CD14-positive monocyte (primary cell): ENCODE measurements at regions of chr19 and their contacts with region 1.

Region 1: DNA sequence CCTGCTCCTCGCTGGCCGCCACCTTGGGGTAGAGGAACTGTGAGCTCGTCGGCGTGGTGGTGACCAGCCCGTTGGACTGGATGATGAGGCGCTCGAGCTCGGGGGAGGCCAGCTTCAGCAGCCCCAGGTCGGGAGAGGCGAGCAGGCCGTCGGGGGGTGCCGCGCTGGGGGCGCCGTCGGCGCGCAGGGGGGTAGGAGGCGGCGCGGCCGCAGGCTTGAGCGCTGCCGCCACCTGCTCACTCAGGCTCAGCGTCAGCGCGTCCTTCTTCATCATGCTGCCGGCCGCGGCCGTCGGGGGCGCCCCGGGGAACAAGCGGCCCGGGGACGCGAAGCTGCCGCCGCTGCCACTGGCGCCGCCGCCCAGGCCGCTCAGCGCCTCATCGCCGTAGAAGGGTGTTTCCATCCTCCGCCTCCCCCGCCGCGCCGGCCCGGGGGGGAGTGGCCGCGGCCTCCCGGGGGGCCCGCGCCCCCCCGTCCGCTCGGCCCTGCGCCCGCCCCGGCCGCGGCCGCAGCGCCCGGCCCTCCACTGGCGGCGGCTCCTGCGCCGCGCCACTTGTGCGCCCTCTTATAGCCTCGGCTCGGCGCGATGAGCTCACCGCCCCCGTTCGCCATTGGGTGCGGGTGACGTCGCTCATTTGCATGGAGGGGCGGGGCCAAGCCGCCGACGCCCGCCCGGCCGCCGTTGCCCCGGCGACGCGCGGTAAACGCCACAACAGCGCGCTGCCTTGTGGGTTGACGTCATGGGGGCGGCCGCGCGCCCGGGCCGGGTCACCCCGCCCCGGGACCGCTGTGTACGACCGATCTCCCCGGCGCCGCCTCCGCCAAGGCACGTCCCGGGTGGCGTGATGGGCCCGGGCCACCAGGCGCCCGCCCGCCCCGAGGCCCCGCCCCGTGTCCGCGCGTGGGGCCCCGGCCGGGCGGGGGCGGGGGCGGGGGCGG is at the start of gene JUND:
- DNase-seq: peak; percentile 96 to 99 (median 99)
- H3K4me3 ChIP-seq: peak within 1 kb of the TSS; percentile 75 to 99 (median 98)
- H3K4me3 Mint-ChIP-seq: peak within 1 kb of the TSS; percentile 95 to 97
- H3K27ac ChIP-seq: peak within 1 kb of the TSS; percentile 93 to 98
- H3K27ac Mint-ChIP-seq: peak within 1 kb of the TSS; percentile 96 to 99 (median 97)
- H3K4me1 ChIP-seq: peaks cover 27 to 36% of the 10 kb centered on the region in 2 donors
- H3K4me1 Mint-ChIP-seq: peaks cover 33% of the 10 kb centered on the region
- H3K27me3 ChIP-seq: no peaks in the 10 kb centered on the region
- H3K27me3 Mint-ChIP-seq: peaks cover 0 to 4% (median 2%) of the 10 kb centered on the region in 3 donors
- CTCF ChIP-seq: no peak
- polyA plus RNA-seq, gene JUND: 22.5 to 1,792 (median 86.9) TPM

Region 2: DNA sequence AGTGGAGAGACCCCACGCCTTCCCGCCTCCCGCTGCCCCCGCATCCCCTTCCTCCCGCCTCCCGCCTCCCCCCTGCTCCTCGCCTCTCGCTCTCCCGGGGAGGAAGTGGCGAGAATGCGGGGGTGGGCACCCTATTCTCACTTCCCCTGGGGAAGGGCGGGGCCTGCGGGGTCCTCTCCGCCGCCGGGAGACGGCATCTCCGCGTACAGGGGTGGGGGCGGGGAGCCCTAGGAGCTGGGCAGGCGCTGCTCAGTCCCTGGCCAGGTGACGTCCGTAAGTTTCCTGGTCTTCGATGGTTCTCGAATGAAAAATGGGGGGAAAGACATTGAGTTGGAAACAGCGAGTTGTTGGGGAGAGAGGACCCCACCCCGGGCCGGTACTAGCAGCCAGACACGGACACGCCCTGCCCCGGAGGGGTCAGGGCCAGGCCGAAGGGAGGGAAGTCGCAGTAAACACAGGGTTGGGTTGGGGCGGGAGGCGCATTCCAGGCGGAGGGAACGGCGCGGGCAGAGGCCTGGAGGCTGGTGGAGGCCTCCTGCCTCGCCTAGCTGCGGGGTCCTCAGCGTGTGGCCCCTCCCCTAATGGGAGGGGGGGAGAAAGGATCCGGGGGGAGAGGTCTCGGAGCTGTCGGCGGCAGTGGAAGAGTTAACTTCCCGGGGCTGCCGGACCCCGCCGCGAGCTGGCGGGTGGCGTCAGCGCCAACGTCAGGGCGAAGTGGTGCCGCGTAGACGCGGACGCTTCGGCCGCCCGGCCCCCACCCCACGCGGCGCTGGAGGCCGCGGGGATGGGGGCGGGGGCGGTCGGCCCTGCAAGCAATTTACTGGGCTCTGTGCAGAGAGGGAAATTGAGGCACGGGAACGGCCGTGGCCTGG is 10.5 kb after region 1 on chr19:
- intact Hi-C with region 1: loop called (anchors 1 kb)
- DNase-seq: peak; percentile 80 to 90 (median 86)
- H3K4me3 ChIP-seq: peak overlapping the region; percentile 62 to 94 (median 92)
- H3K4me3 Mint-ChIP-seq: peak overlapping the region; percentile 87 to 92
- H3K27ac ChIP-seq: peak overlapping the region; percentile 99 to 100
- H3K27ac Mint-ChIP-seq: peak overlapping the region; percentile 97 to 100 (median 99)
- H3K4me1 ChIP-seq: peaks cover 41 to 50% of the 10 kb centered on the region in 2 donors
- H3K4me1 Mint-ChIP-seq: peaks cover 40% of the 10 kb centered on the region
- H3K27me3 ChIP-seq: no peaks in the 10 kb centered on the region
- H3K27me3 Mint-ChIP-seq: peaks cover 0 to 2% (median 0%) of the 10 kb centered on the region in 3 donors
- CTCF ChIP-seq: no peak

Region 3: DNA sequence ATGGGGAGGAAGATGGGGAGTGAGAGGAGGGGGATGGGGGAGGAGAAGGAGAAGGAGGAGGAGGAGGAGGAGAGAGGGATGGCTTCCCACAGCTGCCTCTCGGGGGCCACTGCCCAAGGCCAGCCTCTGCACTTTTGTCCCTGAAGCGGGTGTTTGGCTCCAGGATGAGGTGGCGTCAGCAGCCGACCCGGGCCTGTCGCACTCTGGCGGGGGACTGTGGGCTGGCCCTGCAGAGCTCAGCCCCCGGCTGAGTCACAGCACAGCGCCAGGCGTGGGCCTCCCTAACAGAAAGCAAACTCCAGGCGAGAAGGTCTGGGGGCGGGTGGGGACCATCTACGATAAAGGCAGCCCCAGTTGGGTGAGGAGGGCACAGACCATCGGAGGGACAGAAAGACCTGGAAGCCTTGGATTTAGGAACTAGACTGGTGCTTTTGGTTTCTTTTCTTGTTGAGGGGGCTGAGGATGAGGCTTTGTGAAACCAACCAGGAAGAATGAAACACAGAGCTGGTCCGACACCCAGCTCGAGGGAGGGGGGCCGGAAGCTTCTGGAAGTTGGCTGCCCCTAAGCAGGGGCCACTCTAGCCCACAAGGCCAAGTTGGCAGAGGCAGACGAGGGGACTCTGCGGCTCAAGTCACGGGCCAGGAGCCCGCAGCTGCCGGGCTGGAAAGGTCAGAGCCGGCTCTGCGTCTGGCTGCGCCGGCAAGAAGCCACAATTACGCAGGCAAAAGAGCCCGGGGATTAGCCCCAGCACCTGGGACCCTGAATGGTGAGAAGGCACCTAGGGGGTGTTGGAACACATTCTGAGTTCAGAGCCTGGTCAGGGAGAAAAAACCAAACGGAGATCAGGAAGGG is 23.3 kb after region 1 on chr19:
- intact Hi-C with region 1: loop called in 1 of 2 experiments (anchors 2 kb)
- DNase-seq: peak; percentile 84 to 86 (median 85)
- H3K4me3 ChIP-seq: peak overlapping the region; percentile 38 to 76 (median 45)
- H3K4me3 Mint-ChIP-seq: peak overlapping the region; percentile 88 to 92
- H3K27ac ChIP-seq: peak overlapping the region; percentile 87 to 98
- H3K27ac Mint-ChIP-seq: peak overlapping the region; percentile 97 to 100 (median 99)
- H3K4me1 ChIP-seq: peaks cover 50 to 57% of the 10 kb centered on the region in 2 donors
- H3K4me1 Mint-ChIP-seq: peaks cover 42% of the 10 kb centered on the region
- H3K27me3 ChIP-seq: no peaks in the 10 kb centered on the region
- H3K27me3 Mint-ChIP-seq: no peaks in the 10 kb centered on the region
- CTCF ChIP-seq: no peak

Region 4: DNA sequence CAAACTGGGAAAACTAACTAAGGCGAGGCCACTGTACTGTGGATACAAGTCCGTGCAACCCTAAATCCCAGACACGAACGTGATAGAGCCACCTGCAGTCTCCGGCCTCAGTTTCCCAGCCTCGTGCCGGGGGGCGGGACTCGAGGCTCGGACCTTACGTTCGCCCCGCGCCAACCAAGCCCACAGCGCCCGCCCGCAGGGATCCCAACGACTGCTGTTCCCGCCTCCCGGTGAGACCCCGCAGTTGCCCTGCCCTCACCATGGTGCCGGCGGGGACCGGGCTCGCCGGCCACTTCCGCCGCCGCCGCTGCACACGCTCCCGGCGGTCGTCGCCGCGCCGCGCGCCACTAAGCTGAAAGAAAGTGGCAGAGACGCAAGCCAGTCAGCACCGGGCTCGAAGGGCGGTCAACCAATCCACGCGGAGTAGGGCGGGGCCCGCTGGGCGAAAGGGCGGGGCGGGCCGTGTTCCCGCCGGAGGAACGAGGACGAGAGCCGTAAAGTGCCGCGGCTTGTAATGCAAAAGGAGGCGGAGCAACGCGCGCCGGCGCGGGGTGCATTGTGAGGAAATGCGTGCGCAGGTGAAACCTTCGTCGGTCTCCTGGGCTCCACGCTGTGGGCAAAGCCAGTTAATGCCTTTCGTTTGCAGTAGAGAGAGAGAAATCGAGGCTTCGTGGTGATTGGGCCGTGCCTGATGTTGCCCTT is 41.6 kb after region 1 on chr19 and contains the start of gene LSM4:
- intact Hi-C with region 1: loop called (anchors 1 to 2 kb)
- DNase-seq: peak; percentile 96 to 98 (median 97)
- H3K4me3 ChIP-seq: peak within 1 kb of the TSS; percentile 60 to 93 (median 73)
- H3K4me3 Mint-ChIP-seq: peak within 1 kb of the TSS; percentile 78 to 91
- H3K27ac ChIP-seq: peak within 1 kb of the TSS; percentile 64 to 89
- H3K27ac Mint-ChIP-seq: peak within 1 kb of the TSS; percentile 90 to 96 (median 94)
- H3K4me1 ChIP-seq: peaks cover 56 to 62% of the 10 kb centered on the region in 2 donors
- H3K4me1 Mint-ChIP-seq: peaks cover 56% of the 10 kb centered on the region
- H3K27me3 ChIP-seq: no peaks in the 10 kb centered on the region
- H3K27me3 Mint-ChIP-seq: no peaks in the 10 kb centered on the region
- CTCF ChIP-seq: no peak
- polyA plus RNA-seq, gene LSM4: 66.5 to 143 (median 97.0) TPM

Region 5: DNA sequence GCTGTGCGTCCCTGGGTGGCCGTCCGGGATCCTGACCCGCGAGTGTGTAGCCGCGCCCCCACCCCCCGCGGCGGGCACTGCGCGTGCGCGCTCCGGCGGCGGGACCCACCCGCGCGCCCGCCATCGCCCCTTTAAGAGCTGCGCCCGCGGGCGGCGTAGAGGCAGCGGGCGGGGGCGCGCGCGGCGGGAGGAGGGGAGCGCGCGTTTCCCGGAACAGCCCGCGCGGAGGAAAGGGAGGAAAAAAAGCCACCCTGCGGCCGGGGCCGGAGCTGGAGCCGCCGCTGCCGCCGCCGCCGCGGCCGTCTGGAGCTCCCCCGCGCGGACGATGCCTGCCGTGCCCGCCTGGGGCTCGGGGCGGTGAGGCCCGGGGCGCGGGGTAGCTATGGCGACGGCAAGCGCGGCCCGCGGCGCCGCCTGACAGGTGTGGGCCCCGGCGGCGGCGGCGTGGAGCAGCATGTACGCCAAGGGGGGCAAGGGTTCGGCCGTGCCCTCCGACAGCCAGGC is 137.9 kb after region 1 on chr19 and contains the start of gene SSBP4:
- intact Hi-C with region 1: loop called in 1 of 2 experiments (anchors 10 kb)
- DNase-seq: peak; percentile 64 to 69 (median 69)
- H3K4me3 ChIP-seq: peak within 1 kb of the TSS; percentile 49 to 74 (median 59)
- H3K4me3 Mint-ChIP-seq: peak within 1 kb of the TSS; percentile 83 to 91
- H3K27ac ChIP-seq: peak within 1 kb of the TSS; percentile 99
- H3K27ac Mint-ChIP-seq: peak within 1 kb of the TSS; percentile 93 to 100 (median 97)
- H3K4me1 ChIP-seq: peaks cover 67 to 85% of the 10 kb centered on the region in 2 donors
- H3K4me1 Mint-ChIP-seq: peaks cover 75% of the 10 kb centered on the region
- H3K27me3 ChIP-seq: no peaks in the 10 kb centered on the region
- H3K27me3 Mint-ChIP-seq: peaks cover 0 to 6% (median 2%) of the 10 kb centered on the region in 3 donors
- CTCF ChIP-seq: peak; percentile 64
- polyA plus RNA-seq, gene SSBP4: 38.5 to 74.5 (median 48.3) TPM

Region 6: GRCh38 chr19:18519962-18520847 is 238.9 kb after region 1 on chr19:
- intact Hi-C with region 1: no loop called
- DNase-seq: peak; percentile 45 to 65 (median 54)
- H3K4me3 ChIP-seq: peak overlapping the region; percentile 73 to 98 (median 84)
- H3K4me3 Mint-ChIP-seq: peak overlapping the region; percentile 95 to 100
- H3K27ac ChIP-seq: peak overlapping the region; percentile 87 to 97
- H3K27ac Mint-ChIP-seq: peak overlapping the region; percentile 92 to 100 (median 97)
- H3K4me1 ChIP-seq: peaks cover 50 to 53% of the 10 kb centered on the region in 2 donors
- H3K4me1 Mint-ChIP-seq: peaks cover 54% of the 10 kb centered on the region
- H3K27me3 ChIP-seq: no peaks in the 10 kb centered on the region
- H3K27me3 Mint-ChIP-seq: peaks cover 0 to under 1% (median 0%) of the 10 kb centered on the region in 3 donors
- CTCF ChIP-seq: peak; percentile 74